CD14-positive monocyte (primary cell): ENCODE measurements at regions of chr6 and their contacts with region 1.

Region 1: GRCh38 chr6:3277851-3278416 is 19.2 kb downstream of the PSMG4 start:
- DNase-seq: no peak
- H3K4me3 ChIP-seq: no peak overlapping the region
- H3K4me3 Mint-ChIP-seq: no peak overlapping the region
- H3K27ac ChIP-seq: no peak overlapping the region
- H3K27ac Mint-ChIP-seq: no peak overlapping the region
- H3K4me1 ChIP-seq: no peaks in the 10 kb centered on the region
- H3K4me1 Mint-ChIP-seq: peaks cover 1% of the 10 kb centered on the region
- H3K27me3 ChIP-seq: no peaks in the 10 kb centered on the region
- H3K27me3 Mint-ChIP-seq: peaks cover 0 to 3% (median 0%) of the 10 kb centered on the region in 3 donors
- CTCF ChIP-seq: no peak

Region 2: GRCh38 chr6:3732345-3733141 is 454.6 kb after region 1 on chr6:
- intact Hi-C with region 1: loop called (anchors 1 to 2 kb)
- DNase-seq: peak; percentile 38 to 59 (median 55)
- H3K4me3 ChIP-seq: no peak overlapping the region
- H3K4me3 Mint-ChIP-seq: no peak overlapping the region
- H3K27ac ChIP-seq: no peak overlapping the region
- H3K27ac Mint-ChIP-seq: no peak overlapping the region
- H3K4me1 ChIP-seq: no peaks in the 10 kb centered on the region
- H3K4me1 Mint-ChIP-seq: peaks cover 5% of the 10 kb centered on the region
- H3K27me3 ChIP-seq: no peaks in the 10 kb centered on the region
- H3K27me3 Mint-ChIP-seq: peaks cover 3 to 6% (median 4%) of the 10 kb centered on the region in 3 donors
- CTCF ChIP-seq: peak; percentile 88

Region 3: DNA sequence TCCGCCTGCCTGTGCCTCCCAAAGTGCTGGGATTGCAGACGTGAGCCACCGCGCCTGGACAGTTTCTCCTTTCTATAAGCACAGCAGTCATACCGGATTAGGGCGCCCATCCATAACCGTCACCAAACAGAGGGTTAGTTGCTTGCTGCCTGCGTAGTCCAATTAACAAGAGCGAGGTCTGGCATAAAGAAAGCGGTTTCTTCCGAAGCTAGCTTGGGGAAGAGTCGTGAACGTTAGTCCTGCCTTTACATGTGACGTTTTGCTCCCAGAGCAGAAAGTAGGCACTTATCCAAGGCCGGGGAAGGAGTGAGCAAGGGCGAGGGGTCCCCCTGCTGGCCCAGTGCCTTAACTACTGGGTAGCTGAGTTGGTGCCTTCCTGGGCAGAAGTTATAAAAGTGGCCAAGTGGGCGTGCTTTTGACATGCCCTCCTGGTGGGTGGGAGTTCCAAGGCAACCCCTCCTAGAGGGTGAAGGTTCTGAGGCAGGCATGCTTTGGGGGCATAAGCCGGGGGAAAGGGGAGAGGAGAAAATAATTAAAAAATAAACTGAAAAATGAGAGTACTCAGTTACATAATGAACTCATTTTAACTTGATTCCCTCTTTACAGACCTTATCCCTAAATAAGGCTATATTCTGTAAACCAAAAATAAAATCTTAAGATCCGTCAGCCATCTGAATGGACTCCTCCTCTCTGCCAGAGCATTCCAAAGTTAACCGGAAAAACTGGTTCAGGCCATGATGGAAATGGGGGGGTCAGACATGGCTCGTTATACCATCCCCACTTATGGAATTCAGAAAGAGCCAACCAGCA is 713.0 kb after region 1 on chr6:
- intact Hi-C with region 1: loop called in 1 of 2 experiments (anchors 5 kb)
- DNase-seq: peak; percentile 57 to 72 (median 64)
- H3K4me3 ChIP-seq: peak overlapping the region in 1 of 3 experiments; percentile 51
- H3K4me3 Mint-ChIP-seq: peak overlapping the region; percentile 54 to 81
- H3K27ac ChIP-seq: no peak overlapping the region
- H3K27ac Mint-ChIP-seq: no peak overlapping the region
- H3K4me1 ChIP-seq: peaks cover 0 to 3% of the 10 kb centered on the region in 2 donors
- H3K4me1 Mint-ChIP-seq: peaks cover 6% of the 10 kb centered on the region
- H3K27me3 ChIP-seq: no peaks in the 10 kb centered on the region
- H3K27me3 Mint-ChIP-seq: peaks cover 0 to 2% (median 0%) of the 10 kb centered on the region in 3 donors
- CTCF ChIP-seq: peak; percentile 83